ENCODE measurements at regions of chr5 and their contacts with region 1.

Region 1: DNA sequence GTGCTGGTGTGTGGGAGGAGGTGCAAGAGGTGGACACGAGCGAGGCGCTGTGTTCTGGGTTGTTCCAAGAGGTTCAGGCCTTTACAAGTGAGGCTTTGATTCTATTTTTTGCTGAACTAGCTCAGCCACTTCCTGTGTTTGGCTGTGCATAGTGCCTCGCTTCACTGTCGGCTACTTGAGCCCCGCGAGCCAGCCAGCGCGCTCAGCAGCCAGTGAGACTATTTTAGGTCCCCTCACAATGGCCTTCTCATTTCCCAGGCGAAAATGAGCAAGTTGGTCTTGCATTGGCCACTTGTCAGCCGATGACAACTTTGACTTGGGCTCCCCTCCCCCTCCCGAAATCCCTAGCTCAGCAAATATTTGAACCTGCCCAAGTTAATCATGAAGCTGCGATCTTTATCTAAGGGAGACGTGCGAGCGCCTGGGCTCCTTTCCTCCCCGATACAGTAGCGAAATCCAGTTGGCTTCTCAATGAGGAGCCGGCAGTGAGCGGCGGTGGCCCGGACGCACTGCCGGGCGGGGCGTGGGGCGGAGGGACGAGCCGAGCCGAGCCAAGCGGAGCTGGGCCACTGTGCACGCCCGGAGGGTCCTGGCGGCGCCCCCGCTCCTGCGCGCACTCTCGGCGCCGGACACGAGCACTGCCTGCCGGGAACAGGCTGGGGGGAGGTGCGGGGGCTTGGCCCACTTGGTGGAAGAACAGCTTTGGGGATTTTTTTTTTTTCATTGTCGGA is 72.6 kb downstream of the PIK3R1 start:
- DNase-seq: peak; percentile 59
- ATAC-seq: peak; percentile 63
- H3K4me3 ChIP-seq: peak overlapping the region; percentile 47 to 75 (median 65)
- H3K4me3 Mint-ChIP-seq: peak overlapping the region; percentile 97
- H3K27ac ChIP-seq: peak overlapping the region; percentile 26 to 64
- H3K27ac Mint-ChIP-seq: peak overlapping the region; percentile 91
- H3K4me1 ChIP-seq: peaks cover 31 to 34% of the 10 kb centered on the region in 2 donors
- H3K4me1 Mint-ChIP-seq: peaks cover 40% of the 10 kb centered on the region
- H3K27me3 ChIP-seq: no peaks in the 10 kb centered on the region
- H3K27me3 Mint-ChIP-seq: no peaks in the 10 kb centered on the region
- CTCF ChIP-seq: no peak

Region 2: GRCh38 chr5:68272289-68272688 is 15.9 kb before region 1 on chr5:
- CTCF ChIA-PET with region 1: interaction called, 31 read pairs
- POLR2A ChIA-PET with region 1: no interaction called
- intact Hi-C with region 1: no loop called
- DNase-seq: peak; percentile 34
- ATAC-seq: no peak
- H3K4me3 ChIP-seq: no peak overlapping the region
- H3K4me3 Mint-ChIP-seq: no peak overlapping the region
- H3K27ac ChIP-seq: no peak overlapping the region
- H3K27ac Mint-ChIP-seq: no peak overlapping the region
- H3K4me1 ChIP-seq: peaks cover 14 to 22% of the 10 kb centered on the region in 2 donors
- H3K4me1 Mint-ChIP-seq: peaks cover 32% of the 10 kb centered on the region
- H3K27me3 ChIP-seq: no peaks in the 10 kb centered on the region
- H3K27me3 Mint-ChIP-seq: no peaks in the 10 kb centered on the region
- CTCF ChIP-seq: peak; percentile 67

Region 3: DNA sequence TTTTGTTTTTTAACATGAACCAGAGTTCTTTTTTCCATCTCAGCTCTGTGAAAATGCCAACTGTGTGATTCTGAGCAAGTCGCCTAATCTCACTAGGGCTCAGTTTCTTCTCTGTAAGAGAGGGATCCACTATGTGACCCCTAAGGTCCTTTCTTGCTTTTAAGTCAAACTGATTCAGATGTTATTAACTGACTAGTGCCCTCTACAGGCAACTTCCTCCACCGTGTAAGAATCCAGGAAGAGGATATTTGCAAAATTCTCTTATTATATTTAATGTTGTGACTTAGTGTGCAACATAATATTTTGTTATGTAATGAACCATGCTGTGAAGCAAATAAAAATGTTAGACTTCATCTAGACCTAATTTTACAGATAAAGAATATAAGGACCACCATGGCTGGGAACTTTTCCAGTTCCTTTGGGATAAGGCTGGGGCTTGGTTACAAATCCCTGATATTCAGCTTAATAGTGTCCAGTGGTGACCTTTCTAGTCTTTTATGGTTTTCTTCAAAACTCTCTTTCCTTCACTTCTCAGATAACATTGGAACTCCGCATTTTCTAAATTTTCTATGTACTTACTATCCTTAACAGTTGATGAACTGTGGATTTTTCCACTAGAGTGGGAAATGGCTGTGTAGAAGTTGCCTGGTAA is 172.1 kb after region 1 on chr5:
- CTCF ChIA-PET with region 1: interaction called, 154 read pairs
- POLR2A ChIA-PET with region 1: no interaction called
- intact Hi-C with region 1: loop called (anchors 1 kb)
- DNase-seq: peak; percentile 74
- ATAC-seq: peak; percentile 31
- H3K4me3 ChIP-seq: no peak overlapping the region
- H3K4me3 Mint-ChIP-seq: no peak overlapping the region
- H3K27ac ChIP-seq: no peak overlapping the region
- H3K27ac Mint-ChIP-seq: no peak overlapping the region
- H3K4me1 ChIP-seq: no peaks in the 10 kb centered on the region
- H3K4me1 Mint-ChIP-seq: no peaks in the 10 kb centered on the region
- H3K27me3 ChIP-seq: no peaks in the 10 kb centered on the region
- H3K27me3 Mint-ChIP-seq: no peaks in the 10 kb centered on the region
- CTCF ChIP-seq: peak; percentile 84

Region 4: GRCh38 chr5:68644971-68645370 is 356.8 kb after region 1 on chr5:
- CTCF ChIA-PET with region 1: no interaction called
- POLR2A ChIA-PET with region 1: no interaction called
- intact Hi-C with region 1: loop called (anchors 10 kb)
- DNase-seq: peak; percentile 50
- ATAC-seq: peak; percentile 87
- H3K4me3 ChIP-seq: no peak overlapping the region
- H3K4me3 Mint-ChIP-seq: no peak overlapping the region
- H3K27ac ChIP-seq: no peak overlapping the region
- H3K27ac Mint-ChIP-seq: peak overlapping the region; percentile 8
- H3K4me1 ChIP-seq: peaks cover 0 to 17% of the 10 kb centered on the region in 2 donors
- H3K4me1 Mint-ChIP-seq: peaks cover 17% of the 10 kb centered on the region
- H3K27me3 ChIP-seq: no peaks in the 10 kb centered on the region
- H3K27me3 Mint-ChIP-seq: no peaks in the 10 kb centered on the region
- CTCF ChIP-seq: no peak

Region 5: GRCh38 chr5:69007726-69008368 is 719.7 kb after region 1 on chr5:
- CTCF ChIA-PET with region 1: interaction called, 27 read pairs
- POLR2A ChIA-PET with region 1: no interaction called
- intact Hi-C with region 1: loop called (anchors 1 kb)
- DNase-seq: peak; percentile 76
- ATAC-seq: peak; percentile 77
- H3K4me3 ChIP-seq: no peak overlapping the region
- H3K4me3 Mint-ChIP-seq: no peak overlapping the region
- H3K27ac ChIP-seq: no peak overlapping the region
- H3K27ac Mint-ChIP-seq: no peak overlapping the region
- H3K4me1 ChIP-seq: no peaks in the 10 kb centered on the region
- H3K4me1 Mint-ChIP-seq: no peaks in the 10 kb centered on the region
- H3K27me3 ChIP-seq: peaks cover 0 to 8% (median 1%) of the 10 kb centered on the region in 4 experiments
- H3K27me3 Mint-ChIP-seq: peaks cover 40% of the 10 kb centered on the region
- CTCF ChIP-seq: peak; percentile 80